CD4-positive, alpha-beta T cell (primary cell): ENCODE measurements at regions of chr19 and their contacts with region 1.

Region 1: GRCh38 chr19:9834726-9835506 is at the start of gene PIN1:
- DNase-seq: peak; percentile 98 to 100 (median 99)
- ATAC-seq: peak; percentile 94
- H3K4me3 ChIP-seq: peak within 1 kb of the TSS; percentile 81
- H3K4me3 Mint-ChIP-seq: peak within 1 kb of the TSS; percentile 96
- H3K27ac ChIP-seq: peak within 1 kb of the TSS; percentile 40 to 76
- H3K27ac Mint-ChIP-seq: peak within 1 kb of the TSS; percentile 94
- H3K4me1 ChIP-seq: peaks cover 33% of the 10 kb centered on the region
- H3K4me1 Mint-ChIP-seq: peaks cover 23% of the 10 kb centered on the region
- H3K27me3 ChIP-seq: no peaks in the 10 kb centered on the region
- H3K27me3 Mint-ChIP-seq: no peaks in the 10 kb centered on the region
- CTCF ChIP-seq: peak; percentile 43
- total RNA-seq, gene PIN1: 33.2 to 35.3 TPM

Region 2: GRCh38 chr19:9818734-9819589 is 16.0 kb before region 1 on chr19 and contains the start of gene FBXL12:
- CTCF ChIA-PET with region 1: interaction called, 3 read pairs
- POLR2A ChIA-PET with region 1: interaction called, 7 read pairs
- intact Hi-C with region 1: loop called in 1 of 2 experiments (anchors 1 kb)
- DNase-seq: peak; percentile 100
- ATAC-seq: peak; percentile 90
- H3K4me3 ChIP-seq: peak within 1 kb of the TSS; percentile 95
- H3K4me3 Mint-ChIP-seq: peak within 1 kb of the TSS; percentile 95
- H3K27ac ChIP-seq: peak within 1 kb of the TSS; percentile 97 to 100
- H3K27ac Mint-ChIP-seq: peak within 1 kb of the TSS; percentile 92
- H3K4me1 ChIP-seq: peaks cover 25% of the 10 kb centered on the region
- H3K4me1 Mint-ChIP-seq: peaks cover 37% of the 10 kb centered on the region
- H3K27me3 ChIP-seq: no peaks in the 10 kb centered on the region
- H3K27me3 Mint-ChIP-seq: no peaks in the 10 kb centered on the region
- CTCF ChIP-seq: no peak
- total RNA-seq, gene FBXL12: 33.4 to 38.4 TPM

Region 3: DNA sequence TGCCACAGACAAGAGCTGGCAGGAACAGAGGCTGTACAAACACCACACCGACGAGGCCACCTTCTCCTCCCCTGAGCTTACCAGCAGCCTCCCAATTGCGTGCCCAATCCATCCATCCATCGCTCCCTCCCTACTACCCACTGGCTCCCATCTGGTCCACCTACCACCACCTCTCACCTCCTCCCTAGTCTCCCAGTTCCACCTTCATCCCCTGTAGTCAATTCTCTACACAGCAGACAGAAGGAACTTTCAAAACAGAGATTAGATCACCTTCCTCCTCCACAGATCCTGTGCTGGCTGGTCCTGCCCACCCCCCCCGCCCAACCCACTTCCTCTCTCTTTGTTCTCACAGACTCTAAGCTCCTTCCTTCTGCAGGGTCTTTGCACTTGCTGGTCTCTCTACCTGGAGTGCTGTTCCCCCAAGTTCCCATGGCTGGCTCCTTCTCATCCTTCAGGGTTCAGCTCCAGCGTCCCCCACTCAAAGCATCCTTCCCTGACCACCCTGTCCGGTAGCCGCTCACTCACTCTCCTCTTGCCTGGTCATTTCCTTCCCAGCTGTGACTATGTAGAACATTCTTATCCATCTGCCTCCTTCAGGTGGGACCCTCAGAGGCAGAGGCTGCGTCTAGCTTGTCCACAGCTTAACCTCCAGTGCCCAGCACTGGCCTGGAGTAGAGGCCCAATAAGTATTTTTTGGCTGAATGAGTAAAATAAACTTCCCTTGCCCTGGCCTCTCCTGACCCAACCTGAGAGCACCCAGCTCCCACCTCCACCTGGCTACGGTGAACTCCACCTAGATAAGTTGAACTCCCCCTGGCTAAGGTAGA is 23.2 kb after region 1 on chr19:
- CTCF ChIA-PET with region 1: interaction called, 5 read pairs
- POLR2A ChIA-PET with region 1: interaction called, 18 read pairs
- intact Hi-C with region 1: loop called (anchors 2 kb)
- DNase-seq: peak in 9 of 14 experiments; percentile 7 to 76 (median 24)
- ATAC-seq: peak; percentile 75
- H3K4me3 ChIP-seq: peak overlapping the region; percentile 57
- H3K4me3 Mint-ChIP-seq: peak overlapping the region; percentile 87
- H3K27ac ChIP-seq: peak overlapping the region; percentile 54 to 84
- H3K27ac Mint-ChIP-seq: peak overlapping the region; percentile 83
- H3K4me1 ChIP-seq: peaks cover 88% of the 10 kb centered on the region
- H3K4me1 Mint-ChIP-seq: peaks cover 86% of the 10 kb centered on the region
- H3K27me3 ChIP-seq: no peaks in the 10 kb centered on the region
- H3K27me3 Mint-ChIP-seq: no peaks in the 10 kb centered on the region
- CTCF ChIP-seq: no peak

Region 4: GRCh38 chr19:9865732-9866501 is 31.0 kb after region 1 on chr19:
- CTCF ChIA-PET with region 1: interaction called, 5 read pairs
- POLR2A ChIA-PET with region 1: interaction called, 7 read pairs
- intact Hi-C with region 1: loop called (anchors 2 kb)
- DNase-seq: peak in 12 of 14 experiments; percentile 26 to 84 (median 49)
- ATAC-seq: peak; percentile 78
- H3K4me3 ChIP-seq: no peak overlapping the region
- H3K4me3 Mint-ChIP-seq: peak overlapping the region; percentile 70
- H3K27ac ChIP-seq: no peak overlapping the region
- H3K27ac Mint-ChIP-seq: peak overlapping the region; percentile 90
- H3K4me1 ChIP-seq: peaks cover 66% of the 10 kb centered on the region
- H3K4me1 Mint-ChIP-seq: peaks cover 56% of the 10 kb centered on the region
- H3K27me3 ChIP-seq: no peaks in the 10 kb centered on the region
- H3K27me3 Mint-ChIP-seq: no peaks in the 10 kb centered on the region
- CTCF ChIP-seq: no peak

Region 5: GRCh38 chr19:10085641-10086590 is 251.0 kb after region 1 on chr19 and contains the start of gene SHFL:
- CTCF ChIA-PET with region 1: no interaction called
- POLR2A ChIA-PET with region 1: no interaction called
- intact Hi-C with region 1: loop called in 1 of 2 experiments (anchors 10 kb)
- DNase-seq: peak; percentile 72 to 93 (median 82)
- ATAC-seq: peak; percentile 94
- H3K4me3 ChIP-seq: peak within 1 kb of the TSS; percentile 99
- H3K4me3 Mint-ChIP-seq: peak within 1 kb of the TSS; percentile 95
- H3K27ac ChIP-seq: peak within 1 kb of the TSS; percentile 83 to 86
- H3K27ac Mint-ChIP-seq: peak within 1 kb of the TSS; percentile 86
- H3K4me1 ChIP-seq: peaks cover 19% of the 10 kb centered on the region
- H3K4me1 Mint-ChIP-seq: peaks cover 12% of the 10 kb centered on the region
- H3K27me3 ChIP-seq: no peaks in the 10 kb centered on the region
- H3K27me3 Mint-ChIP-seq: no peaks in the 10 kb centered on the region
- CTCF ChIP-seq: no peak
- total RNA-seq, gene SHFL: 58.5 to 61.7 TPM